CD4-positive, alpha-beta T cell (primary cell): ENCODE measurements at regions of chr5 and their contacts with region 1.

Region 1: GRCh38 chr5:131263648-131264450 is at the start of gene CDC42SE2:
- DNase-seq: peak; percentile 72 to 95 (median 84)
- ATAC-seq: peak; percentile 86
- H3K4me3 ChIP-seq: peak within 1 kb of the TSS; percentile 97
- H3K4me3 Mint-ChIP-seq: peak within 1 kb of the TSS; percentile 94
- H3K27ac ChIP-seq: peak within 1 kb of the TSS; percentile 87 to 95
- H3K27ac Mint-ChIP-seq: peak within 1 kb of the TSS; percentile 99
- H3K4me1 ChIP-seq: peaks cover 35% of the 10 kb centered on the region
- H3K4me1 Mint-ChIP-seq: peaks cover 46% of the 10 kb centered on the region
- H3K27me3 ChIP-seq: no peaks in the 10 kb centered on the region
- H3K27me3 Mint-ChIP-seq: no peaks in the 10 kb centered on the region
- CTCF ChIP-seq: no peak
- total RNA-seq, gene CDC42SE2: 218 to 230 TPM

Region 2: GRCh38 chr5:131209506-131210150 is 54.2 kb before region 1 on chr5:
- CTCF ChIA-PET with region 1: no interaction called
- POLR2A ChIA-PET with region 1: interaction called, 54 read pairs
- intact Hi-C with region 1: loop called in 1 of 2 experiments (anchors 2 kb)
- DNase-seq: peak; percentile 7 to 91 (median 40)
- ATAC-seq: peak; percentile 93
- H3K4me3 ChIP-seq: peak overlapping the region; percentile 19
- H3K4me3 Mint-ChIP-seq: peak overlapping the region; percentile 77
- H3K27ac ChIP-seq: peak overlapping the region; percentile 69 to 79
- H3K27ac Mint-ChIP-seq: peak overlapping the region; percentile 96
- H3K4me1 ChIP-seq: peaks cover 25% of the 10 kb centered on the region
- H3K4me1 Mint-ChIP-seq: peaks cover 62% of the 10 kb centered on the region
- H3K27me3 ChIP-seq: no peaks in the 10 kb centered on the region
- H3K27me3 Mint-ChIP-seq: no peaks in the 10 kb centered on the region
- CTCF ChIP-seq: no peak

Region 3: DNA sequence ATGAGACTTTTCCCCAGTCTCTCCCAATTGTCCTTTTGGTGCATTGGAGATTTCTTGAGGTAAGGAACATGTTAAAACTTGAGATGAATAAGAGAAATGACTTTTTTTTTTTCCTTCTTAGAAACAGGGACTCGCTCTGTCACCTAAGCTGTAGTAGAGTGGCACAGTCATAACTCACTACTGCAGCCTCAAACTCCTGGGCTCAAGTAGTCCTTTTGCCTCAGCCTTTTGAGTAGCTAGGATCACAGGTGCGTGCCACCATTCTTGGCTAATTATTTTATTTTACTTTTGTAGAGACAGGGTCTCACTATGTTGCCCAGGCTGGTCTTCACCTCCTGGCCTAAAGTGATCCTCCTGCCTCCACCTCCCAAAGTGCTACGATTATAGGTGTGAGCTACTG is 25.9 kb after region 1 on chr5:
- CTCF ChIA-PET with region 1: interaction called, 4 read pairs
- POLR2A ChIA-PET with region 1: interaction called, 45 read pairs
- intact Hi-C with region 1: no loop called
- DNase-seq: peak in 2 of 14 experiments; percentile 26 to 42
- ATAC-seq: peak; percentile 57
- H3K4me3 ChIP-seq: peak overlapping the region; percentile 30
- H3K4me3 Mint-ChIP-seq: peak overlapping the region; percentile 80
- H3K27ac ChIP-seq: peak overlapping the region; percentile 52 to 68
- H3K27ac Mint-ChIP-seq: peak overlapping the region; percentile 92
- H3K4me1 ChIP-seq: peaks cover 71% of the 10 kb centered on the region
- H3K4me1 Mint-ChIP-seq: peaks cover 76% of the 10 kb centered on the region
- H3K27me3 ChIP-seq: no peaks in the 10 kb centered on the region
- H3K27me3 Mint-ChIP-seq: no peaks in the 10 kb centered on the region
- CTCF ChIP-seq: no peak

Region 4: DNA sequence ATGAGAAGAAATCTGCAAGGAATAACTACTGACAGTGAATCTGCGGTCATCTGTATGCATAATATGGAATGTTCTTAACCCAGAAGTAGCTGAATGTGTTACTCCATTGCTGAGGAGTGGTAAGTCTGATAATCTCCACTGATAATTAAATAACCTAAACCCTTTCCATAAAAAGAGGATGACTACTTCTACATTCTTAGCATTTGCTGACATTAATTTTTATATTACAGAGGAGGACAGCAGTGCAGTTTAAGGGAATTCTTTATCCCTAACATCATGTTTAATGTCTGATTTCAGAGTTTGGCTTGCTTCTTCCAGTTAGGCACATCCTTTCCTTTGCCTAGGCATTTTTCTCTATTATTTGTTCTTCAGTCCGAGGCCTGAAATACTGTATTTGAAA is 52.2 kb after region 1 on chr5:
- CTCF ChIA-PET with region 1: interaction called, 7 read pairs
- POLR2A ChIA-PET with region 1: interaction called, 38 read pairs
- intact Hi-C with region 1: loop called in 1 of 2 experiments (anchors 5 kb)
- DNase-seq: no peak
- ATAC-seq: no peak
- H3K4me3 ChIP-seq: no peak overlapping the region
- H3K4me3 Mint-ChIP-seq: no peak overlapping the region
- H3K27ac ChIP-seq: no peak overlapping the region
- H3K27ac Mint-ChIP-seq: peak overlapping the region; percentile 33
- H3K4me1 ChIP-seq: peaks cover 49% of the 10 kb centered on the region
- H3K4me1 Mint-ChIP-seq: peaks cover 84% of the 10 kb centered on the region
- H3K27me3 ChIP-seq: no peaks in the 10 kb centered on the region
- H3K27me3 Mint-ChIP-seq: no peaks in the 10 kb centered on the region
- CTCF ChIP-seq: no peak

Region 5: GRCh38 chr5:131357739-131358561 is 94.1 kb after region 1 on chr5:
- CTCF ChIA-PET with region 1: no interaction called
- POLR2A ChIA-PET with region 1: interaction called, 45 read pairs
- intact Hi-C with region 1: no loop called
- DNase-seq: peak in 5 of 14 experiments; percentile 27 to 67 (median 61)
- ATAC-seq: peak; percentile 64
- H3K4me3 ChIP-seq: no peak overlapping the region
- H3K4me3 Mint-ChIP-seq: peak overlapping the region; percentile 70
- H3K27ac ChIP-seq: peak overlapping the region; percentile 5 to 57
- H3K27ac Mint-ChIP-seq: peak overlapping the region; percentile 88
- H3K4me1 ChIP-seq: peaks cover 40% of the 10 kb centered on the region
- H3K4me1 Mint-ChIP-seq: peaks cover 85% of the 10 kb centered on the region
- H3K27me3 ChIP-seq: no peaks in the 10 kb centered on the region
- H3K27me3 Mint-ChIP-seq: no peaks in the 10 kb centered on the region
- CTCF ChIP-seq: no peak

Region 6: DNA sequence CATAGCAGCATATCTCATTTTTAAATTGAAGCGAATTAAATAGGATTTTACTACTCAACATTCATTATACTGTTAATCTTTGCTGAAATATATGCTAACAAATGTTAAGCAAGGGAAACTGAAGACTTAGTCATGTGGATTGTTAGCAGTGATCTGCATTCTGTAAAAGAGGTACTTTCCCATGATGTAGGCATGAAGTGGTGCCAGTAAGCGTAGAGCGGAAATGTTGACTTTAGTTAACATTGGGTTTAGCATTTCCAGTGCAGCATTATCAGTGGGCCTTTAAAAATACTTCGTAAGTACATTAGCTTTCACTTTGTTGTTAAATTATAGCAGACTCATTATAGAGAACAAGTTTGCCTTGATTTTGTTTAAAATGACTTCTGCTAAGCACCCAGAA is 130.3 kb after region 1 on chr5:
- CTCF ChIA-PET with region 1: interaction called, 3 read pairs
- POLR2A ChIA-PET with region 1: interaction called, 44 read pairs
- intact Hi-C with region 1: no loop called
- DNase-seq: peak in 7 of 14 experiments; percentile 32 to 91 (median 54)
- ATAC-seq: peak; percentile 95
- H3K4me3 ChIP-seq: peak overlapping the region; percentile 2
- H3K4me3 Mint-ChIP-seq: peak overlapping the region; percentile 55
- H3K27ac ChIP-seq: peak overlapping the region; percentile 85 to 92
- H3K27ac Mint-ChIP-seq: peak overlapping the region; percentile 97
- H3K4me1 ChIP-seq: peaks cover 54% of the 10 kb centered on the region
- H3K4me1 Mint-ChIP-seq: peaks cover 95% of the 10 kb centered on the region
- H3K27me3 ChIP-seq: no peaks in the 10 kb centered on the region
- H3K27me3 Mint-ChIP-seq: no peaks in the 10 kb centered on the region
- CTCF ChIP-seq: no peak